Right ventricle myocardium inferior (tissue), 1 donor: ENCODE measurements at regions of chr1 and their contacts with region 1.

Region 1: DNA sequence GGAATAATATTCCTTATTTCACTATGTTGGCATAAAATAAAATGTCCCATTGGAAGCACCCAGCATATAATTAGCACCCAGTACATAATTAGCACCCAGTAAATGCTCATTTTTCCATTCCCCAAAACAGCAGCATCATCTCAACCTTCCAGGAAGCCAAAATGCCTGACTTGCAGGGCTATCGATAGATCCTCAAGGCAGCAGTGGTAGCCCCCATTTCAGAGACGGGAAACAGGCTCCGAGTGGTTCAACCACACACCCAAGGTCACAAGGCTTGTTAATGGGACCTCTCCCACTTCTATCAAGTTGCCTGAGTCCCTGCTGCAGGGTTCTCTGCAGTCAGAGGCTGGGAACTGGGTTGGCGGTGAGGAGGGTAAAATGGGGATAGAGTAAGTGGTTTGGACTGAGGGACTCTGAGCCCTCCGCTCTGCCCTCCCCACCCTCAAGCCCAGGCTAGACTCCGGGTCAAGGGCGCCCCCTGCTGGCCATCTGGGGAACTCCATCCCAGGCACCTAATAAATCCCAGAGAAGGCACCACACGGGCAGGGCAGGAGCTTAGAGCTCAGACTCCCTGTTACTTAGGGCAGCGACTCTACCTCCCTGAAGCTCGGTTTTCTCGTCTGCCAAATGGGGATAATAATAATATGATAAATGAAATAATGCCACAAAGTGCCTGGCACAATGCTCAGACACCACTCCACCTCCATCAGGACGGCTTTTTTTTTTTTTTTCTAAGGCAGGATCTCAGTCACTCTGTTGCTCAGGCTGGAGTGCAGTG is 21.9 kb upstream of the LAPTM5 start:
- DNase-seq: peak; percentile 92
- ATAC-seq: peak; percentile 66

Region 2: DNA sequence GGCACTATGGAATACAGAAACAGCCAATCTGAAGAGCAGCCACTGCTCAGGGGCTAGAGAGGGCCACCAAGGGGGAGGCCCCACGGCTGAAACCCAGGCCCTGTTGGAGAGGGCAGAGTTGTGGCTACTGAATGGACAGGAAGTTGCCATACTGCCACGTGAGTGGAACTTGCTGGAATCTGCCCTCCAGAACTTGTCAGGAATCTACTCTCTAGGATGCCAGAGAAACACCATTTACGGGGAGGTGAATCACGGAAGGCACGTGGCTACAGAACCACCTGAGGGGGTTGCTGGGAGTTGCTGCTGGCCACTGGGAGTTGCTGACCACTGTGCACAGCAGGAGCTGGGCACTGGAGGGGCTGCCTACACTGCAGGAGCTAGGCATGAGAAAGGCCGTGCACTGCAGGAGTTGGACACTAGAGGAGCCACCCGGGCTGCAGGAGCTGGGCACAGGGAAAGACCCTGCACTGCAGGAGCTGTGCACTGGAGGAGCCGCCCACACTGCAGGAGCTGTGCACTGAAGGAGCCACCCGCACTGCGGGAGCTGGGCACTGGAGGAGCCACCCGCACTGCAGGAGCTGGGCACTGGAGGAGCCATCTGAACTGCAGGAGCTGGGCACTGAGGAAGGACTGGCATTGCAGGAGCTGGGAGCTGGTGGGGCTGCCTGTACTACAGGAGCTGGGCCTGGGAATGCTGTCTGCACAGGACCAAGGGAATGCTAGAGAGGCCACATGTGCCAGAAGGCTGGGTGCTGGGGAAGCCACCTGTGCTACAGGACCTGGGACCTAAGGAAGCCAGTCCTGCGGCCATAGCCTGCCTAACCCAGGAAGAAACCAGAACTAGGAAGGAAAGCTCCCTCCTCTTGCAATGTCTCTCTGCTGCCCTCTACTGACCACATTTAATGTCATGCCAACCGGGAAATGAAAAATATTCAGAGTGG is 399.5 kb before region 1 on chr1:
- intact Hi-C with region 1: no loop called
- DNase-seq: no peak
- ATAC-seq: peak; percentile 64

Region 3: GRCh38 chr1:30718636-30719405 is 60.7 kb before region 1 on chr1:
- intact Hi-C with region 1: loop called (anchors 1 kb)
- DNase-seq: peak; percentile 90
- ATAC-seq: peak; percentile 89